Mammary epithelial cell (primary cell): ENCODE measurements at regions of chr2 and their contacts with region 1.

Region 1: DNA sequence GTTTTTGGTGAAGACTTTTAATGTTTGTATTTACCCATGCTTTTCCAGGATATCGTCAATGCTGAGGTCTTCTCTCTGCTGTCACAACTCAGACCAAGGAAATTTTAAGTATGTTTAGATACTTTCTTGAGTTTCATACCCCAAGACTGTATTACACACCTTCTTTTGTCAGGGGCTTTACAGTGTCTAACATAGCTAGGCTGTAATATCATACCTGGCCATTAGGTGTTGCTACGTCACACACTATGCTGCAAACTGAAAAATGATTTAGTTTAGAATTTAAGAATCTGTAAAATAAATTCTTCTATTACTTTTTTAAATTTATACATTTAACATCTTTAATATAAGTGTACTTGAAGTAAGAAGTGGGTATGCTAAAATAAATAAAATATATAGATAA is 358.4 kb upstream of the NRP2 start:
- DNase-seq: peak; percentile 4
- H3K4me3 ChIP-seq: no peak overlapping the region
- H3K27ac ChIP-seq: no peak overlapping the region
- H3K4me1 ChIP-seq: no peaks in the 10 kb centered on the region
- H3K27me3 ChIP-seq: no peaks in the 10 kb centered on the region
- CTCF ChIP-seq: peak; percentile 78 to 87

Region 2: DNA sequence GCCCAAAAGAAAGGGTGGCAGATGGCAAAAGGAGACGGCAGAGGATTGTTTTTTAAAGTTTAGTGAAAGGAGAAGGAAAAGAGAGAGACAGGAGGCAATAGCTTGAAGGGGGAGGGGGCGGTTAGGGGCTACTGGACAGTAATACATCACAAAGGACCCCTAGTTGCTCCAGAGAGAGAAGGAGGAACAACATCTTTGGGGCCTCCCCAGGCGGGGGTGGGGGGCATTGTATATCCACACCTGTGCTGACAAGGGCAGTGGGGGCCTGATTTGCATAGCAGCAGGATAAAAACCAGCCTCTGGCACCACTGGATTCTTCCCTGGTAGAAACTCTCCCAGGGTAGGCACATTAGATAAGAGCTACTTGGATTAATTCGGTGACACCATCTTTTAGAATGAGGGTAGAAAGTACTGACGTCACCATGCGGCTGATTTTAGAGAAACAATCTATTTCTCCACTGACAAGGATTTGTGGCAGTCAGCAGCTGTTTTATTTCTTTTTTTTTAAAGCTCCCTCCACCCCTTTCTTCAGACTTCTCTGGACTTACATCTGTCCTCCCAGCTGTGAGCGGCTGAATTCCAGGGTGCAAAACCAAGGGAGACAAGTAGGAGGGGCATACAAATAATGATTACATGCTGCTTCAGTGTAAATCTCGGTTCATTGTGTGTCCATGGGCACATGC is 158.6 kb after region 1 on chr2:
- CTCF ChIA-PET with region 1: no interaction called
- dilution Hi-C with region 1: no loop called
- in situ Hi-C with region 1: no loop called
- intact Hi-C with region 1: loop called (anchors 5 kb)
- DNase-seq: no peak
- H3K4me3 ChIP-seq: no peak overlapping the region
- H3K27ac ChIP-seq: no peak overlapping the region
- H3K4me1 ChIP-seq: no peaks in the 10 kb centered on the region
- H3K27me3 ChIP-seq: no peaks in the 10 kb centered on the region
- CTCF ChIP-seq: no peak